Tibial artery (tissue), 4 donors: ENCODE measurements at regions of chr16 and their contacts with region 1.

Region 1: DNA sequence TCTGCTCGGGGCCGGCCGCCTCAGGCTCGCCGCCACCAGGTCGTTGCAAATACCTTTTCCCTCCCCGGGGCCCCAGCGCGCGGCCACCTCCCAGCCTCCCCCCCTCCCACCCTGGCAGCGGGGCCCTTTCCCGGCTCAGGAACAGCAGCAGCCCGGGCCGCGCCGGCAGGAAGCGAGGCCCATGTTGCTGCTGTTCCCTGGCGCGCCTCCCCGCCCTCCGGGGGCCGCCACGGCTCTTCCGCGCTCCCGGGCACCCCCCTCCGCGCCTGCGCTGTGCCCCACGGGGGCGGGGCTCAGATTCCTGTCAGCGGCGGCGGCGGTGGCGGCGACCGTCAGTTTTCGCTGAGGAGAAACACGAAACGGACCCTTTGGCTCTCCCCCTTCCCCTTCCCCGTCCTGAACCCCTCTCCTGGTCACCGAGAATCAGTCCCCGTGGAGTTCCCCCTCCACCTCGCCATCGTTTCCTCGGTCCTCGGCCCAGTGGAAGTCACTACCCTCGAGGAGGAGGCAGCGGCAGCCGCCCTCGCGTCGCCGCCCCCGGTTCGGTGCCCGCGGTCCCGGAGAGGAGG is at the start of gene NFAT5:
- DNase-seq: peak; percentile 82 to 94
- H3K4me3 ChIP-seq: peak within 1 kb of the TSS; percentile 66 to 98
- H3K27ac ChIP-seq: peak within 1 kb of the TSS; percentile 98 to 99
- H3K4me1 ChIP-seq: peaks cover 0 to 45% (median 23%) of the 10 kb centered on the region in 4 donors
- H3K27me3 ChIP-seq: no peaks in the 10 kb centered on the region
- CTCF ChIP-seq: no peak

Region 2: GRCh38 chr16:69089091-69089910 is 476.5 kb before region 1 on chr16:
- intact Hi-C with region 1: no loop called
- DNase-seq: no peak
- H3K4me3 ChIP-seq: no peak overlapping the region
- H3K27ac ChIP-seq: no peak overlapping the region
- H3K4me1 ChIP-seq: no peaks in the 10 kb centered on the region
- H3K27me3 ChIP-seq: no peaks in the 10 kb centered on the region
- CTCF ChIP-seq: no peak

Region 3: GRCh38 chr16:69339289-69340108 is 226.3 kb before region 1 on chr16 and contains the starts of genes COG8 and NIP7:
- intact Hi-C with region 1: no loop called
- DNase-seq: peak; percentile 97
- H3K4me3 ChIP-seq: peak within 1 kb of the TSS; percentile 70 to 88
- H3K27ac ChIP-seq: peak within 1 kb of the TSS; percentile 87 to 95
- H3K4me1 ChIP-seq: peaks cover 0 to 27% (median 24%) of the 10 kb centered on the region in 4 donors
- H3K27me3 ChIP-seq: no peaks in the 10 kb centered on the region
- CTCF ChIP-seq: peak; percentile 82 to 92

Region 4: GRCh38 chr16:69396187-69397061 is 169.3 kb before region 1 on chr16:
- intact Hi-C with region 1: loop called (anchors 10 kb)
- DNase-seq: peak; percentile 75 to 80
- H3K4me3 ChIP-seq: no peak overlapping the region
- H3K27ac ChIP-seq: peak overlapping the region; percentile 73 to 80
- H3K4me1 ChIP-seq: peaks cover 0 to 23% (median 11%) of the 10 kb centered on the region in 4 donors
- H3K27me3 ChIP-seq: no peaks in the 10 kb centered on the region
- CTCF ChIP-seq: peak; percentile 72 to 79